GM13976 (cell line): ENCODE measurements at regions of chrX and their contacts with region 1.

Region 1: DNA sequence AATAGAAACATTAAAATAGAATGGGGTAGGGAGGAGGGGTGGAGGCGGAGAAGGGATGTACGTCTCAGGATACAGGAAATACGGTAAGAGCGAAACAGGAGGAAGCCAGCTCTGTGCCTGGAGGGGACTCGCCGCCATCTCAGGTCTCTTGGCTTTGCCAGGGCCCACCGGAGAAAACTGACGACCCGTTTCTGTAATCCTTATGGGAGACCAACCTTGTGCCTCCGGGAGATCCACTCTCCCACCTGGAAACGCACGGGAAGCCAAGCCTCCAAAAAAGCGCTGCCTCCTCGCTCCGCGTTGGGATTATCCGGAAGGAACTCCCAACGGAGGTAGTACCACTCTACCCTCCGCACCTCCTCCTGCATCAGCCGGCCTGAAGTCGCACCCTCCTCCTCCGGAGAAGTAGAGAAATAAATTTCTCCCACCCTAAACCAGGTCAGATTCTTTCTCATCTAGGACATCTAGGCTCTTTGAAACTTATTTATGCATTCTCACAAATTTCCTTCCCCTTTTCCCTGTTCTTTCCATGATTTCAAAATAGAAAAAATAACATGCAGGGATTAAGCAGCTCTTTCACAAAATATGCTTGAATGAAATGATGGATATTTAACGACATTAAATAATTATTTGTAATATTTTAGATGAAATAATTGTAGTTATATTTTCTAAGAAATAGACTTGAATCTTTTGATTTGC is at the start of gene NBDY:
- DNase-seq: no peak
- CTCF ChIP-seq: no peak

Region 2: GRCh38 chrX:56281789-56282188 is 447.5 kb before region 1 on chrX:
- in situ Hi-C with region 1: loop called (anchors 25 kb)
- DNase-seq: no peak
- CTCF ChIP-seq: no peak

Region 3: DNA sequence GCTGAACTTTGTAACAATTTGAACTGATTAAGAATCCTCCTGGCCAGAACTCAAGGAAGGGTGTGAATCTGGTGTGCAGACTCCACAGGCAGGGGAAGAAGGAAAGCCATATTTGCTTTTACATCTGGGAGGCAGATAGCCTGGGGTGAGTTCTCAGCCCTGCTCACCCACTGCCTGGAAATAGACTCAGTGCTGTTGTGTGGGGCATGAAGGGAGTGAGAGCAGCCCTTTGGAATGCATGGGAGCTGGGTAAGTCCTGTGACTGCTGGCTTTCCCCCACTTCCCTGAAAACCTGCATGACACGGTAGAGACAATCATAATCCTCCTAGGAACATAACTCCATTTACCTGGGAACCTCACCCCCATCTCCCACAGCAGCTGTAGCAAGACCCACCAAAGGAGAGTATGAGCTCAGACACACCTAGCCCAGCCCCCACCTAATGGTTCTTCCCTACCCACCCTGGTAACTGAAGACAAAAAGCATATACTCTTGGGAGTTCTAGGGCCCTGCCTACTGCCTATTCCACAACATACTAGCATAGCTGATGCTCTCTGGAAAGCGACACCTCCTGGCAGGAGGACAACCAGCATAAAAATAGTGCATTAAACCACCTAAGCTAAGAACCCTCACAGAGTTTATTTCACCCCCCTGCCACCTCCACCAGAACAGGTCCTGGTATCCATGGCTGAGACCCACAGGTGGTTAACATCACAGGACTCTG is 225.2 kb before region 1 on chrX:
- in situ Hi-C with region 1: loop called (anchors 25 kb)
- DNase-seq: no peak
- CTCF ChIP-seq: no peak